Natural killer cell (primary cell): ENCODE measurements at regions of chrX and their contacts with region 1.

Region 1: DNA sequence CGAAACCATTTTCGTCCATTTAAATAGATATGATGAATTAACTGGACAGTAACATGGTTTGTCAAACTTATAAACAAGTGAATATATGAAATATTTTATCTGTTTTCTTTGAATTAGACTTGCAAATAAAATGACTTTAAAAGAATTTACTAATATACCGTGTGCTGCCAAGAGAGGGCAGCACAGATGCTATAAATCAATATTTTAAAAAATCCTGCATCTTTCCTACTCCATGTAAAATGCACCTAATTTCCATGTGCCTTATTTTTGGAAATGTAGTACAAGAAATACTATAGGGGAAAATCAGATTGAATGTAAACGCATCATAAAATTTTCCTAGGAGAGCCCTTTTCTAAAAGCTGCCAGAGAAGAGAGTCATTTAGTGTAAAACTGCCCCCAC is 62.2 kb downstream of the PRKX start:
- DNase-seq: peak in 1 of 2 donors; percentile 49
- ATAC-seq: peak in 1 of 3 donors; percentile 47
- H3K4me3 ChIP-seq: no peak overlapping the region
- H3K4me3 Mint-ChIP-seq: no peak overlapping the region
- H3K27ac ChIP-seq: no peak overlapping the region
- H3K27ac Mint-ChIP-seq: peak overlapping the region in 1 of 2 donors; percentile 42
- H3K4me1 ChIP-seq: no peaks in the 10 kb centered on the region
- H3K4me1 Mint-ChIP-seq: peaks cover 0 to 5% of the 10 kb centered on the region in 2 donors
- H3K27me3 ChIP-seq: no peaks in the 10 kb centered on the region
- H3K27me3 Mint-ChIP-seq: no peaks in the 10 kb centered on the region
- CTCF ChIP-seq: peak; percentile 63

Region 2: GRCh38 chrX:3788509-3789233 is 137.4 kb after region 1 on chrX:
- intact Hi-C with region 1: loop called (anchors 10 kb)
- DNase-seq: peak in 1 of 2 donors; percentile 29
- ATAC-seq: peak in 1 of 3 donors; percentile 55
- H3K4me3 ChIP-seq: no peak overlapping the region
- H3K4me3 Mint-ChIP-seq: no peak overlapping the region
- H3K27ac ChIP-seq: no peak overlapping the region
- H3K27ac Mint-ChIP-seq: no peak overlapping the region
- H3K4me1 ChIP-seq: peaks cover 4% of the 10 kb centered on the region
- H3K4me1 Mint-ChIP-seq: peaks cover 4 to 25% of the 10 kb centered on the region in 2 donors
- H3K27me3 ChIP-seq: no peaks in the 10 kb centered on the region
- H3K27me3 Mint-ChIP-seq: peaks cover 0 to under 1% of the 10 kb centered on the region in 2 donors
- CTCF ChIP-seq: peak; percentile 15

Region 3: GRCh38 chrX:3811331-3812311 is 160.3 kb after region 1 on chrX:
- intact Hi-C with region 1: loop called (anchors 1 kb)
- DNase-seq: peak; percentile 16 to 79
- ATAC-seq: no peak
- H3K4me3 ChIP-seq: no peak overlapping the region
- H3K4me3 Mint-ChIP-seq: peak overlapping the region; percentile 23
- H3K27ac ChIP-seq: no peak overlapping the region
- H3K27ac Mint-ChIP-seq: peak overlapping the region; percentile 65 to 78
- H3K4me1 ChIP-seq: peaks cover 18% of the 10 kb centered on the region
- H3K4me1 Mint-ChIP-seq: peaks cover 9 to 18% of the 10 kb centered on the region in 2 donors
- H3K27me3 ChIP-seq: no peaks in the 10 kb centered on the region
- H3K27me3 Mint-ChIP-seq: peaks cover 15 to 30% of the 10 kb centered on the region in 2 donors
- CTCF ChIP-seq: peak; percentile 37